Dendritic cell treated with granulocyte-macrophage colony-stimulating factor and Interleukin-4, amounts not matched to agents 40 ng/mL and 50 ng/mL, for 4 days (primary cell): ENCODE measurements at regions of chr5 and their contacts with region 1.

Region 1: GRCh38 chr5:96336351-96336985 is 96.6 kb downstream of the PCSK1 start:
- H3K4me3 Mint-ChIP-seq: no peak overlapping the region
- H3K27ac Mint-ChIP-seq: no peak overlapping the region
- H3K4me1 Mint-ChIP-seq: peaks cover 18% of the 10 kb centered on the region
- H3K27me3 Mint-ChIP-seq: no peaks in the 10 kb centered on the region

Region 2: GRCh38 chr5:95664204-95664786 is 672.2 kb before region 1 on chr5:
- intact Hi-C with region 1: loop called (anchors 10 kb)
- H3K4me3 Mint-ChIP-seq: no peak overlapping the region
- H3K27ac Mint-ChIP-seq: no peak overlapping the region
- H3K4me1 Mint-ChIP-seq: no peaks in the 10 kb centered on the region
- H3K27me3 Mint-ChIP-seq: no peaks in the 10 kb centered on the region

Region 3: DNA sequence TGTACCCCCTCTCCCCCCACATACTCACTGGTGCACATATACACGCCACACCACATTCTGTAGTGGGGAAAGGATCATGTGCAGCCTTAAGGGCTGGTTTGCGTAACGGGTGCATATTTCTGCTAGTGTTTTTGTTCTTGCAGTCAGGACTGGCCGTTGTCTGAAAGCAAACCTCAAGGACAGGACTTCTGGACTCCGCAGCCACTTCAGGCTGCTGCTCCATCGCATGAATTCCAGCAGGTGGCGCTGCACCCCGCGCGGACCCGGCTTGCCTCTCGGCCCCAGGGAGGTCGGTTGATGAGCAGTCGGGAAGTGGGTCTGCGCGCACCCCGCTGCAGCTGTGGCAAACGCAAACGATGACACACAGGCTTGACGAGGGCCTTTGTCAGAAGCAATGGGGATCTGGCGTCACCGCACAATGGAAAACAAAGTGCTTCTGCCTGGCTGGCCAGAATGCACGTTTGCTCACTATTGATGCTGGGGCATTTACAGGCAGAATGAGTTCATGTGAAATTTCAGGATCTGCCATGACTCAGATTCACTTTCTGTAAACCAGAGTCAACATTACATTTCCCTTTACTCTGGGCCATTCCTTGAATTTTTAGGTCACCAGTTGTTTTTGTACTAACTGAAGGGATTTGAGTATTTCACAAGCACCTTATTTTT is 477.7 kb before region 1 on chr5:
- intact Hi-C with region 1: loop called (anchors 1 kb)
- H3K4me3 Mint-ChIP-seq: peak overlapping the region; percentile 58
- H3K27ac Mint-ChIP-seq: no peak overlapping the region
- H3K4me1 Mint-ChIP-seq: peaks cover 54% of the 10 kb centered on the region
- H3K27me3 Mint-ChIP-seq: peaks cover 6% of the 10 kb centered on the region

Region 4: DNA sequence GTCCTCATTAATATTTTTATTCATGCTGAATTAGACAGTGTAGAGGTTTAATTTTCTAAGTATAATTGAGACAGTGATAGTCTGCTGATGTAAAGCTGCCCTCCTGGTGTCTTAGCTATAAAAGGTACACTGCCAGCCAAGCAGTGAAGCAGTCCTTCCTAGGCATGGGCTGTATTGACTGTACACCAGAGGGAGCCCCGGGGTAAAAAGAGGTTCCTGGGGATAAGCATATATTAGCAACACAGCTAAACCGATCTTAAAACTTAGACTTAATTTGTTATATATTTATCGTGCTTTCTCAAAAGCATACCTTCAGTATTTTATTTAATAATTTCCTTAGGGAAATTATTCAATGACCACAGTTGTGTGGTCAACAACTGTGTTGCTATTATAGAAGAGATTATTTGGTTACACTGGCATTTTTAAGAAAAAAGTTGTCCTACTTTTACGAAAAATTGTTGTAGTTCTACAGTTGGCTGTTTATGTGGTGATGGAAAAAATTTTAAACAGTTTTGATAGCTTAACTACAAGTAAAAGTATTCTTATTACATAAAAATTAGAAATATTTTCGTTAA is 443.6 kb before region 1 on chr5:
- intact Hi-C with region 1: loop called (anchors 10 kb)
- H3K4me3 Mint-ChIP-seq: no peak overlapping the region
- H3K27ac Mint-ChIP-seq: no peak overlapping the region
- H3K4me1 Mint-ChIP-seq: no peaks in the 10 kb centered on the region
- H3K27me3 Mint-ChIP-seq: no peaks in the 10 kb centered on the region

Region 5: GRCh38 chr5:96426831-96427230 is 90.4 kb after region 1 on chr5:
- intact Hi-C with region 1: no loop called
- H3K4me3 Mint-ChIP-seq: no peak overlapping the region
- H3K27ac Mint-ChIP-seq: no peak overlapping the region
- H3K4me1 Mint-ChIP-seq: no peaks in the 10 kb centered on the region
- H3K27me3 Mint-ChIP-seq: peaks cover 23% of the 10 kb centered on the region